ENCODE measurements at regions of chr4 and their contacts with region 1.

Region 1: DNA sequence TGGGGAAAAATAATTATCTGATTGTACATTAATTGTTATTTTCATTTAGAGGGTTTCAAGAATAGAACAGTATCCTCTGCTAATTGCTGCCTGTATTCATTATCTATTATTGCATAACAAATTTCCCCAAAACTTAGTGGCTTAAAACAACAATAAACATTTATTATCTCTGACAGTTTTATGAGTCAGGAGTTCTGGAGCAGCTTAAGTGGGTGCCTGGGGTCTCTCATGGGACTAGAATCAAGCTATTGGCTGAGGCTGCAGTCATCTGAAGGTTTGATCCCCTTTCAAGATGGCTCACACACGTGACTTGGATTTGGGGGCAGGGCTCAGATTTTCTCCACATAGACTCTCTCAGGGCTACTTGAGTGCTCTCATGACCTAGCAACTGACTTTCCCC is 98.1 kb upstream of the JADE1 start:
- DNase-seq: no peak
- H3K4me3 ChIP-seq: no peak overlapping the region
- H3K27ac ChIP-seq: peak overlapping the region in 1 of 2 donors; percentile 5
- H3K4me1 ChIP-seq: no peaks in the 10 kb centered on the region
- H3K27me3 ChIP-seq: no peaks in the 10 kb centered on the region
- CTCF ChIP-seq: no peak
- POLR2A ChIP-seq: no peak

Region 2: DNA sequence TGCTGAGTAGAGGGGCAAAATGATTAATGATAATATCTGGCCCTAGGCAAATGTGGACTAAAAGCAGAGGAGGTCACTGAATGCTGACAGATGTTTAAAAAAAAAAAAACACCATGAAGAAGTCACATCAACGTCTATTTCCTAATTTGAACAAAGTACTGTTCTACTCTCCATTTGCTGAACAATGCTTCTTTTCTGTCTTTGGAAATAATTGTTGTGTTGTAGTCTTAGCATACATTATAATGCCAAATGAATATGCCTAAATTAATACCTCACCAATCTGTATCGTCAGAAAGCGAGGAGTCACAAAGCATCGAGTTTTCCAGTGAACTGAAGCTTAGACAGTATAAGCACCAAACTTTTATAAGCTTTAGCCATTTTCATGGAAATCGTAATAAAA is 42.8 kb before region 1 on chr4:
- intact Hi-C with region 1: loop called (anchors 5 kb)
- DNase-seq: no peak
- H3K4me3 ChIP-seq: no peak overlapping the region
- H3K27ac ChIP-seq: no peak overlapping the region
- H3K4me1 ChIP-seq: no peaks in the 10 kb centered on the region
- H3K27me3 ChIP-seq: no peaks in the 10 kb centered on the region
- CTCF ChIP-seq: no peak
- POLR2A ChIP-seq: no peak

Measured in breast epithelium (tissue), 4 donors.